Caco-2 (cell line): ENCODE measurements at regions of chr17 and their contacts with region 1.

Region 1: GRCh38 chr17:951325-952132 is 28.0 kb downstream of the NXN start:
- DNase-seq: peak; percentile 93 to 96
- H3K4me3 ChIP-seq: peak overlapping the region; percentile 24
- H3K4me3 Mint-ChIP-seq: peak overlapping the region; percentile 74
- H3K27ac Mint-ChIP-seq: peak overlapping the region; percentile 98
- H3K4me1 ChIP-seq: peaks cover 51% of the 10 kb centered on the region
- H3K4me1 Mint-ChIP-seq: peaks cover 31% of the 10 kb centered on the region
- H3K27me3 ChIP-seq: no peaks in the 10 kb centered on the region
- H3K27me3 Mint-ChIP-seq: no peaks in the 10 kb centered on the region
- CTCF ChIP-seq: no peak

Region 2: DNA sequence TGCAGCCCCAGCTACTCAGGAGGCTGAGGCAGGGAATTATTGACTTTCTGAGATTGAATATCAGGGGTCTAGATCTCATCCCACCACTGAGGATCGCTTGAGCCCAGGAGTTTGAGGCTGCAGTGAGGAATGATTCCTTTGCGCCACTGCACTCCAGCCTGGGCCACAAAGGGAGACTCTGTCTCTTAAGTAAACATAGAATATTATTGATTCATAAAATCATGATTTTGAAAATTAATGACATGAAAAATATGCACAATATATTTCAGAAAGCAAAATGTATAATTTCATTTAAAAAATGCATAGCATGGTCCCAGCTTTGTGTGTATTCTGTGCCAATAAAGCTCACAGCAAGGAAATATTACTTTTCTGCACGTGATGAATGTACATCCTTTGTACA is 235.3 kb before region 1 on chr17:
- CTCF ChIA-PET with region 1: no interaction called
- POLR2A ChIA-PET with region 1: interaction called, 19 read pairs
- intact Hi-C with region 1: no loop called
- DNase-seq: no peak
- H3K4me3 ChIP-seq: peak overlapping the region; percentile 56; the same call in 1 of the 2 replicates
- H3K4me3 Mint-ChIP-seq: no peak overlapping the region
- H3K27ac Mint-ChIP-seq: no peak overlapping the region
- H3K4me1 ChIP-seq: no peaks in the 10 kb centered on the region
- H3K4me1 Mint-ChIP-seq: no peaks in the 10 kb centered on the region
- H3K27me3 ChIP-seq: no peaks in the 10 kb centered on the region
- H3K27me3 Mint-ChIP-seq: no peaks in the 10 kb centered on the region
- CTCF ChIP-seq: no peak

Region 3: GRCh38 chr17:927611-928461 is 23.7 kb before region 1 on chr17:
- CTCF ChIA-PET with region 1: interaction called, 4 read pairs
- POLR2A ChIA-PET with region 1: interaction called, 23 read pairs
- intact Hi-C with region 1: loop called (anchors 1 kb)
- DNase-seq: peak; percentile 78 to 84
- H3K4me3 ChIP-seq: no peak overlapping the region
- H3K4me3 Mint-ChIP-seq: peak overlapping the region; percentile 64
- H3K27ac Mint-ChIP-seq: peak overlapping the region; percentile 88
- H3K4me1 ChIP-seq: peaks cover 72% of the 10 kb centered on the region
- H3K4me1 Mint-ChIP-seq: peaks cover 72% of the 10 kb centered on the region
- H3K27me3 ChIP-seq: no peaks in the 10 kb centered on the region
- H3K27me3 Mint-ChIP-seq: no peaks in the 10 kb centered on the region
- CTCF ChIP-seq: no peak

Region 4: DNA sequence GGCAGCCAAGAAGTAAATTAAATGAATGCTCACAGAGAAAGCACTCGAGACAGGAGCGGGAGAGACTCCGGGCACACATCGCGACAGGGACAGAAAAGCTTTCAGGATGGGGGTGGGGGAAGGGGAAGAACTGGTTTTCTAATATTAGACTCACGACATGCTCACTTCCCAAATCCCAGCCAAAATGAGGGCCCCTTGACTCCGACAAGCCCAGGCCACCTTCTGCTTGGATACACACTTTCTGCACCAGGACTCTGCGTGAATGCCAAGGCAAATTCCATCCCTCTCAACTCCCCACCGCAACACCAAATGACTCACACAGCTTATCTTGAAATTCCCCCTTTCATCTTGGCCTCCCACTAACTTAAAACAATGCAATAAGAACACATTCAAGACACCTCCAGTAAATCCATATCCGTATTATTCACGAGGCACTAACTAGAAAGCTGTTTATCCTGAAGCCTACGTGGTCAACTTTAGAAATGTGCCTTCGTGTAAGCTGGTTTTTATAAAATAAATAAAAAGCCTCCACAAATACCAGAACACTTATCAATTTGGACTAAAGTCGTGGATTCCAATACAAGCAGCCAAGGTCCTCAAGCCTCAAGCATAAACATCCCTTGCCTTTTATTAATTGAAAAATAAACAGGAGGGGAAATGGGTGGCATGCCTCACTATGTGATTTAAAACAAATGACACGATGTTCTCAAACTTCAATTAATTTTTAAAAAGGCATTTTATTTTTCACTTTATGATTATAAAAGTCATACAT is 18.0 kb before region 1 on chr17:
- CTCF ChIA-PET with region 1: interaction called, 3 read pairs
- POLR2A ChIA-PET with region 1: interaction called, 23 read pairs
- intact Hi-C with region 1: loop called (anchors 2 kb)
- DNase-seq: peak; percentile 82 to 90
- H3K4me3 ChIP-seq: no peak overlapping the region
- H3K4me3 Mint-ChIP-seq: peak overlapping the region; percentile 67
- H3K27ac Mint-ChIP-seq: peak overlapping the region; percentile 98
- H3K4me1 ChIP-seq: peaks cover 81% of the 10 kb centered on the region
- H3K4me1 Mint-ChIP-seq: peaks cover 47% of the 10 kb centered on the region
- H3K27me3 ChIP-seq: no peaks in the 10 kb centered on the region
- H3K27me3 Mint-ChIP-seq: no peaks in the 10 kb centered on the region
- CTCF ChIP-seq: no peak

Region 5: GRCh38 chr17:969811-970355 is 18.4 kb after region 1 on chr17:
- CTCF ChIA-PET with region 1: interaction called, 5 read pairs
- POLR2A ChIA-PET with region 1: interaction called, 24 read pairs
- intact Hi-C with region 1: loop called (anchors 1 kb)
- DNase-seq: no peak
- H3K4me3 ChIP-seq: peak overlapping the region; percentile 24
- H3K4me3 Mint-ChIP-seq: peak overlapping the region; percentile 74
- H3K27ac Mint-ChIP-seq: peak overlapping the region; percentile 91
- H3K4me1 ChIP-seq: peaks cover 71% of the 10 kb centered on the region
- H3K4me1 Mint-ChIP-seq: peaks cover 46% of the 10 kb centered on the region
- H3K27me3 ChIP-seq: no peaks in the 10 kb centered on the region
- H3K27me3 Mint-ChIP-seq: no peaks in the 10 kb centered on the region
- CTCF ChIP-seq: no peak

Region 6: GRCh38 chr17:996554-997344 is 45.2 kb after region 1 on chr17 and contains the start of gene TIMM22:
- CTCF ChIA-PET with region 1: interaction called, 4 read pairs
- POLR2A ChIA-PET with region 1: interaction called, 10 read pairs
- intact Hi-C with region 1: no loop called
- DNase-seq: peak; percentile 97
- H3K4me3 ChIP-seq: peak within 1 kb of the TSS; percentile 87
- H3K4me3 Mint-ChIP-seq: peak within 1 kb of the TSS; percentile 97
- H3K27ac Mint-ChIP-seq: peak within 1 kb of the TSS; percentile 99
- H3K4me1 ChIP-seq: peaks cover 10% of the 10 kb centered on the region
- H3K4me1 Mint-ChIP-seq: peaks cover 11% of the 10 kb centered on the region
- H3K27me3 ChIP-seq: no peaks in the 10 kb centered on the region
- H3K27me3 Mint-ChIP-seq: no peaks in the 10 kb centered on the region
- CTCF ChIP-seq: peak; percentile 93 to 95
- total RNA-seq, gene TIMM22: 20.1 and 20.6 TPM in 2 replicates

Region 7: DNA sequence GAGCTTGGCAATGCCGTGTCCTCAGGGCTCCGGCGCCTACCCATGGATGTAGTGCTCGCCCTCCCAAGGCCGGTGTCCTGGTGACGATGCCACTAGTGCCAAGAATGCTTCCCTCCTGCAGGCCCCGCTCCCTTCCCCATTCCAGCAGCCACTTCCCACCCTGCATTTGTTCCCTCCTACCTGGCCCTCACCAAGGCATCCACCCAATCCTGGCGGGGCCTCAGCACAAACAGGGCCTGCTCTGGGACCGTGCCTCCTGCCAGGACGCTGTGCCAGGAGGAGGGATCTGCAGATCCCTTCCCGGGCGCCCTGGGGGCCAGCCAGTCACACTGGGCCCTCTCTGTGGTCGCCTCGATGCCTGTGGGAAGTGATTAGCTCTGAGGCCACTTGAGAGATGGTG is 203.2 kb after region 1 on chr17:
- CTCF ChIA-PET with region 1: no interaction called
- POLR2A ChIA-PET with region 1: no interaction called
- intact Hi-C with region 1: no loop called
- DNase-seq: no peak
- H3K4me3 ChIP-seq: no peak overlapping the region
- H3K4me3 Mint-ChIP-seq: no peak overlapping the region
- H3K27ac Mint-ChIP-seq: no peak overlapping the region
- H3K4me1 ChIP-seq: no peaks in the 10 kb centered on the region
- H3K4me1 Mint-ChIP-seq: no peaks in the 10 kb centered on the region
- H3K27me3 ChIP-seq: no peaks in the 10 kb centered on the region
- H3K27me3 Mint-ChIP-seq: no peaks in the 10 kb centered on the region
- CTCF ChIP-seq: no peak